CD4-positive, alpha-beta T cell (primary cell): ENCODE measurements at regions of chr12 and their contacts with region 1.

Region 1: GRCh38 chr12:57846577-57847319 is at the start of gene CTDSP2:
- DNase-seq: peak; percentile 66 to 98 (median 88)
- ATAC-seq: peak; percentile 28
- H3K4me3 ChIP-seq: peak within 1 kb of the TSS; percentile 86
- H3K4me3 Mint-ChIP-seq: peak within 1 kb of the TSS; percentile 87
- H3K27ac ChIP-seq: peak within 1 kb of the TSS; percentile 57 to 91
- H3K27ac Mint-ChIP-seq: peak within 1 kb of the TSS; percentile 92
- H3K4me1 ChIP-seq: peaks cover 47% of the 10 kb centered on the region
- H3K4me1 Mint-ChIP-seq: peaks cover 53% of the 10 kb centered on the region
- H3K27me3 ChIP-seq: no peaks in the 10 kb centered on the region
- H3K27me3 Mint-ChIP-seq: peaks cover 5% of the 10 kb centered on the region
- CTCF ChIP-seq: no peak
- total RNA-seq, gene CTDSP2: 86.2 to 86.4 TPM

Region 2: DNA sequence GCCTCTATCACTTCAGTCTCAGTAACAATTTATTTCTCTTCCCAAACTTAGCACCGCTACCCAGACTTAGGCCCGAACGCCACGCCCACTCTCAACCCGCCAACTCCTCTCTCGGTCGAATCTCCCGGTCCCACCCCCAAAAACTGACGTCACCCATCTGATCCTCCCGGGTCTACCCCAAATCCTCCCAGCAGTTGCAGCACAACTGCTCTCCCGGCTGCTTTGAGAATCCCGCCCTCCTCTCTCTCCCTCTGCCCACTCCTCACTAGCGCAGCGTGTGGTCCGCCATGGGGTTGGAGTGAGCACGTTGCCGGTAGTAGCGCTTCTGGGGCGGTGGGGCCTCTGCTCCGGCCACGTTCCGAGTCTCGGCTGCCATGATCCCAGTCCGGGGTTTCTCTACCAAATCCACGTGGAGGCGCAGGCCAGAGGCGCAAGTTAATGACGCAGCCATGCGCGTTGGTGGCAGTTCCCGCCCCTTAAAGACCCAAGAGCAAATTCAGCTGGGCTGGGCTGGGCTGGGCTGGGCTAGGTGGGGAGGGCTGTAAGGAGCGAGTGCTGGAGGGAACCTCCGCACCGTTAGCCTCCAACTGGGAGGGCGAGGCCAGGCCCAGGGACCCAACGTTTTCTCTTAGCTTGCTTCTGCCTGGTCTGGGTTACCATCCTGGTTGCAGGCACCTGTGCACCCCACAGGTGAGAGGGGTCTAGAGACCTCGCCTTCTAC is 74.9 kb before region 1 on chr12 and contains the start of gene METTL1:
- CTCF ChIA-PET with region 1: no interaction called
- POLR2A ChIA-PET with region 1: no interaction called
- intact Hi-C with region 1: loop called (anchors 5 kb)
- DNase-seq: peak; percentile 73 to 95 (median 83)
- ATAC-seq: peak; percentile 90
- H3K4me3 ChIP-seq: peak within 1 kb of the TSS; percentile 63
- H3K4me3 Mint-ChIP-seq: peak within 1 kb of the TSS; percentile 94
- H3K27ac ChIP-seq: peak within 1 kb of the TSS; percentile 79 to 85
- H3K27ac Mint-ChIP-seq: peak within 1 kb of the TSS; percentile 93
- H3K4me1 ChIP-seq: peaks cover 30% of the 10 kb centered on the region
- H3K4me1 Mint-ChIP-seq: peaks cover 16% of the 10 kb centered on the region
- H3K27me3 ChIP-seq: peaks cover under 1 to 9% of the 10 kb centered on the region in 2 experiments
- H3K27me3 Mint-ChIP-seq: no peaks in the 10 kb centered on the region
- CTCF ChIP-seq: no peak
- total RNA-seq, gene METTL1: 9.3 to 12.0 TPM

Region 3: GRCh38 chr12:57803319-57803893 is 43.3 kb before region 1 on chr12:
- CTCF ChIA-PET with region 1: interaction called, 4 read pairs
- POLR2A ChIA-PET with region 1: interaction called, 3 read pairs
- intact Hi-C with region 1: loop called in 1 of 2 experiments (anchors 1 kb)
- DNase-seq: peak in 13 of 14 experiments; percentile 10 to 58 (median 29)
- ATAC-seq: no peak
- H3K4me3 ChIP-seq: no peak overlapping the region
- H3K4me3 Mint-ChIP-seq: no peak overlapping the region
- H3K27ac ChIP-seq: no peak overlapping the region
- H3K27ac Mint-ChIP-seq: no peak overlapping the region
- H3K4me1 ChIP-seq: no peaks in the 10 kb centered on the region
- H3K4me1 Mint-ChIP-seq: no peaks in the 10 kb centered on the region
- H3K27me3 ChIP-seq: no peaks in the 10 kb centered on the region
- H3K27me3 Mint-ChIP-seq: no peaks in the 10 kb centered on the region
- CTCF ChIP-seq: peak; percentile 76

Region 4: DNA sequence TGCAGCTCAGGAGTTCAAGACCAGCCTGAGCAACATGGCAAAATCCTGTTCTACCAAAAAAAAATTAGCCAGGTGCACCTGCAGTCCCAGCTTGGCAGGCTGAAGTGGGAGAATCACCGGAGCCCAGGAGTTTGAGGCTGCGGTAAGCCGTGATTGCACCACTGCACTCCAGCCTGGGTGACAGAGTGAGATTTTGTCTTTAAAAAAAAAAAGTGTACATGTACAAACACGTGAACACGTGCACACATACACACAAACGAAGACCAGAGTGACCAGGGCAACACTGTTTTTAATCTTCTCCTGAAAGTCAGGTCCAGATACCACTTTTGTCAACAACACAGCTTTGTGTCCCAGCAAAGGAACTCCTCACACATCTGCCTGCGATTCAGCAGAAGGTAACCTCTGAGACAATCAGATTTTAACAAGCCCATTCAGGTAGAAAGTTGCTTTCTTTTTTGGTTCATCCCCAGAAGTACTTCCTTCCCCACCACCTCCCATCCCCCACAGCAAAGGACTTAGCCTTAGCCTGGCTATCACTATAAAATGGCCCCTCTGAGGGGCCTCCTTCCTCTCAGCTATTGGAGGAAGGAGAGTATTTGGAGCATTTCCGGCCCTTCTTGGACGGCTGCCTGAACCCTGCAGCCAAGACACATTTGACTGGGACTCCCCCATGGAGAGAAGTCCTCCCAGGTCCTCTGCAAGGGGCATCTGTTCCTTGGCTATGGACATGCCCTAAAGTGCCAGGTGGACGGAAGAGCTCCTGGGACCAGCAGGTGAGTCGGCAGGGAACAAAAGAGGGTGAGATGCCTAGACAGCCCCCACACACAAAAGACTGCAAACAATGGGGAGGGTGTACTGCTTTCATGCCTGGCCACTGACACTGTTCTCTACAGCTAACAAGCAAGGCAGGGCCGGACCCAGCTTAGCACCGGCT is 10.0 kb before region 1 on chr12:
- CTCF ChIA-PET with region 1: interaction called, 9 read pairs
- POLR2A ChIA-PET with region 1: interaction called, 46 read pairs
- intact Hi-C with region 1: loop called in 1 of 2 experiments (anchors 1 kb)
- DNase-seq: peak in 6 of 14 experiments; percentile 26 to 73 (median 54)
- ATAC-seq: peak; percentile 15
- H3K4me3 ChIP-seq: peak overlapping the region; percentile 31
- H3K4me3 Mint-ChIP-seq: peak overlapping the region; percentile 74
- H3K27ac ChIP-seq: peak overlapping the region; percentile 71 to 79
- H3K27ac Mint-ChIP-seq: peak overlapping the region; percentile 92
- H3K4me1 ChIP-seq: peaks cover 99% of the 10 kb centered on the region
- H3K4me1 Mint-ChIP-seq: peaks cover 98% of the 10 kb centered on the region
- H3K27me3 ChIP-seq: no peaks in the 10 kb centered on the region
- H3K27me3 Mint-ChIP-seq: no peaks in the 10 kb centered on the region
- CTCF ChIP-seq: no peak

Region 5: DNA sequence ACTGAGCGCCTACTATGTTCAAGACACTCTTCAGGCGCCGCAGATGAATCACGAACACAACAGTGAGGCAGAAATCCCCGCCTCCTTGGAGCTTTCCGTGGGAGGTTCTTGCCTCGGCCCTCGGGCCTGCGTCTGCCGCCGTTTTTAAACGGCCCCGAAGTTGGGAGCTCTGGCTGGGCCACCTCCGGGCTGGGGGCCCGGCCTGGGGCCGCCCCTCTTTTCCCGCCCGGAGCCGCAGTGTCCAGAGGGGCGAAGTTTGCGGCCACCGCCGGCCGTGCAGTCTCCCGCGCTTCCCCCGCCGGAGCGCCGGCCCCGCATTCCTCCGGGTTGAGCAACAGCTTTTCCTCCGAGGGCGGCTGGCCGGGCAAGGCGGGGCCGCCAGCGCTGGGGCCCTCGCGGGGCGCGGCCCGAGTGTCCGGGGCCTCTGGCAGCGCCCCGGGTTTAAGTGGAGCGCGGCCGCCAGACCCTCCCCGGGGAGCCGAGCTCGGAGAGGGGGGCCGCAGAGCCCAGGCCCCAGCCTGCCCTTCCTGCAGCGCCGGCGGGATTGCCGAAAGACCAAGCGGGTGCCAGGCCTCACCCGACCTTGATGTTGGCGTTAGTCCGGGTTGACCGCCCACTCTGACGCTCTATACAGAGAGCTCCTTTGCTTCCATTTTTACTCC is 18.5 kb after region 1 on chr12:
- CTCF ChIA-PET with region 1: interaction called, 4 read pairs
- POLR2A ChIA-PET with region 1: interaction called, 20 read pairs
- intact Hi-C with region 1: loop called in 1 of 2 experiments (anchors 1 kb)
- DNase-seq: peak in 9 of 14 experiments; percentile 34 to 77 (median 53)
- ATAC-seq: peak; percentile 86
- H3K4me3 ChIP-seq: peak overlapping the region; percentile 55
- H3K4me3 Mint-ChIP-seq: peak overlapping the region; percentile 87
- H3K27ac ChIP-seq: no peak overlapping the region
- H3K27ac Mint-ChIP-seq: no peak overlapping the region
- H3K4me1 ChIP-seq: peaks cover 15% of the 10 kb centered on the region
- H3K4me1 Mint-ChIP-seq: peaks cover 9% of the 10 kb centered on the region
- H3K27me3 ChIP-seq: no peaks in the 10 kb centered on the region
- H3K27me3 Mint-ChIP-seq: peaks cover 32% of the 10 kb centered on the region
- CTCF ChIP-seq: no peak

Region 6: GRCh38 chr12:57899010-57899662 is 52.4 kb after region 1 on chr12:
- CTCF ChIA-PET with region 1: interaction called, 13 read pairs
- POLR2A ChIA-PET with region 1: interaction called, 124 read pairs
- intact Hi-C with region 1: loop called in 1 of 2 experiments (anchors 2 kb)
- DNase-seq: peak; percentile 62 to 94 (median 74)
- ATAC-seq: peak; percentile 88
- H3K4me3 ChIP-seq: no peak overlapping the region
- H3K4me3 Mint-ChIP-seq: peak overlapping the region; percentile 87
- H3K27ac ChIP-seq: peak overlapping the region; percentile 75 to 81
- H3K27ac Mint-ChIP-seq: peak overlapping the region; percentile 94
- H3K4me1 ChIP-seq: peaks cover 61% of the 10 kb centered on the region
- H3K4me1 Mint-ChIP-seq: peaks cover 61% of the 10 kb centered on the region
- H3K27me3 ChIP-seq: no peaks in the 10 kb centered on the region
- H3K27me3 Mint-ChIP-seq: no peaks in the 10 kb centered on the region
- CTCF ChIP-seq: no peak